K562 (cell line): ENCODE measurements at regions of chr14 and their contacts with region 1.

Region 1: DNA sequence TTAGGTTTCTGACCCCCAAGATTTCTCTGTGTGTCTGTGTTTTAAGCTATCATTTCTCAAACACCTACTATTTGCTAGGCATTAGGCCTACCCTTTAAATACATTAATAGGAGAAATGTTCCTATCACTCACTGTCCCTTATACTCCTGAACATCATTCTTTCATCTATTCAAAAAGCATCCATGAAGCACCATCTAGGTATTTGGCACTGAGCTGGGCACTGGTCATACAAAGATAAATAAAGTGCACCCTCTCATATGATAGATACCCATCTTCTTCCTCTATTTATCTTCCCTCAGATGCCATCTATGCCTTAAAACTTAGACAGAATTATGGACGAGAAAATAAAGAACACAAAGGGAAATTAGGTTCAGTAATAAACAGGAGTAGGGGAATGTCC is 20.4 kb downstream of the SIX1 start:
- DNase-seq: no peak
- ATAC-seq: no peak
- H3K4me3 ChIP-seq: no peak overlapping the region
- H3K27ac ChIP-seq: no peak overlapping the region
- H3K4me1 ChIP-seq: no peaks in the 10 kb centered on the region
- H3K27me3 ChIP-seq: no peaks in the 10 kb centered on the region
- CTCF ChIP-seq: no peak
- EP300 ChIP-seq: no peak
- POLR2A ChIP-seq: no peak
- RAD21 ChIP-seq: no peak

Region 2: GRCh38 chr14:61196792-61197191 is 567.9 kb after region 1 on chr14:
- CTCF ChIA-PET with region 1: interaction called, 3 read pairs
- POLR2A ChIA-PET with region 1: no interaction called
- in situ Hi-C with region 1: no loop called
- intact Hi-C with region 1: loop called (anchors 5 kb)
- DNase-seq: no peak
- ATAC-seq: no peak
- H3K4me3 ChIP-seq: no peak overlapping the region
- H3K27ac ChIP-seq: no peak overlapping the region
- H3K4me1 ChIP-seq: no peaks in the 10 kb centered on the region
- H3K27me3 ChIP-seq: no peaks in the 10 kb centered on the region
- CTCF ChIP-seq: peak in 1 of 3 experiments; percentile 22; a peak in 1 of 6 replicates
- EP300 ChIP-seq: no peak
- POLR2A ChIP-seq: no peak
- RAD21 ChIP-seq: peak in 1 of 2 experiments; percentile 41; a peak in 2 of 4 replicates